Heart left ventricle (tissue), 16 donors: ENCODE measurements at regions of chr11 and their contacts with region 1.

Region 1: DNA sequence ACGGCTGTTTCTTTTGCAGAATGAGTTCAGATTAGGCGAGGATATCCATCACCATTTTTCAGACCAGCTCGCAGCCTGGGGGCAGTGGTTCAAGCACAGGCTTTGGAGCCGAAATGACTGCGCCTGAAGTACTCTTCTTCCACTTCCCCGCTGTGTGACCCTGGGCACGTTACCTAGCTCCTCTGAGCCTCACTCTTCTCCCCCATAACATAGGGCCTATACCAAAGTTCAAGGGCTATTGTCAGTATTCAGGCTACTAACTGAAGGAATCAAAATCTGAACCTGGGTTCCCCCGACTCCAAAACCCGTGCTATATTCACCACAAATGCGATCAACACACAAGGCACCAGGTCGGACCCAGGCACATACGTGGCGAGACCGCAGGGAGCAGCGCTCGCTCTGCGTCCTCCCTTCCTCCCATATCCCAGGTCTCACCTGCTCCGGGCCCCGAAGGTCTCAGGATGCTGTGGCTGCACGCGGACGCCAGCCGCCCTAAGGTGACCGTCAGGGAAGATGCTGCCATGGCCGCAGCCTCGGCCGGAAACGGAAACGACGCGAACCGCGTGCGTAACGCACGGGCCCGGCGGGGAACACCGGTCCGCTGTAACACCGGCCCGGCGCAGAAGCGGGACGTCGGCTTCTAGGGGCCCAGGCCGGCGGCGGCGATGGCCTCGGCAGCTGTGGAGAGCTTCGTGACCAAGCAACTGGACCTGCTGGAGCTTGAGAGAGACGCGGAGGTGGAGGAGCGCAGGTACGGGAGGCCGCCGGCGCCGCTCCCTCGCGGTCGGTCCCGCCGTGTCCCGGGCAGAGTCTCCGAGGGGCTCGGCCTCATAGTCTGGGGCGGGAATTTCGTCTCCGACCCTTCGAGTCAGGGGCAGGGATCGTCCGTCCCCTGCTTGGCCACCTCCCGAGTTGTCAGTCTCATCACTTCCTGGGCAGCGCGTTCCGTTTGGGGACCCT is at the starts of genes IGHMBP2 and MRPL21:
- DNase-seq: peak; percentile 82 to 92 (median 87)
- ATAC-seq: peak; percentile 84 to 96 (median 96)
- H3K4me3 ChIP-seq: peak within 1 kb of the TSS; percentile 73 to 96 (median 86)
- H3K27ac ChIP-seq: peak within 1 kb of the TSS; percentile 39 to 93 (median 86)
- H3K4me1 ChIP-seq: peaks cover 10 to 45% (median 28%) of the 10 kb centered on the region in 12 donors
- H3K27me3 ChIP-seq: no peaks in the 10 kb centered on the region
- CTCF ChIP-seq: peak in 1 of 12 donors; percentile 15
- POLR2A ChIP-seq: peak in 1 of 2 donors; percentile 73
- total RNA-seq, gene IGHMBP2: 8.3 to 18.9 (median 13.7) TPM
- total RNA-seq, gene MRPL21: 59.9 to 120 (median 87.9) TPM

Region 2: GRCh38 chr11:69018924-69019323 is 115.4 kb after region 1 on chr11:
- intact Hi-C with region 1: no loop called
- DNase-seq: no peak
- ATAC-seq: no peak
- H3K4me3 ChIP-seq: no peak overlapping the region
- H3K27ac ChIP-seq: peak overlapping the region in 1 of 12 donors; percentile 78
- H3K4me1 ChIP-seq: peaks cover 0 to 9% (median 1%) of the 10 kb centered on the region in 12 donors
- H3K27me3 ChIP-seq: peaks cover 0 to 8% (median 0%) of the 10 kb centered on the region in 9 donors
- CTCF ChIP-seq: no peak
- POLR2A ChIP-seq: no peak

Region 3: DNA sequence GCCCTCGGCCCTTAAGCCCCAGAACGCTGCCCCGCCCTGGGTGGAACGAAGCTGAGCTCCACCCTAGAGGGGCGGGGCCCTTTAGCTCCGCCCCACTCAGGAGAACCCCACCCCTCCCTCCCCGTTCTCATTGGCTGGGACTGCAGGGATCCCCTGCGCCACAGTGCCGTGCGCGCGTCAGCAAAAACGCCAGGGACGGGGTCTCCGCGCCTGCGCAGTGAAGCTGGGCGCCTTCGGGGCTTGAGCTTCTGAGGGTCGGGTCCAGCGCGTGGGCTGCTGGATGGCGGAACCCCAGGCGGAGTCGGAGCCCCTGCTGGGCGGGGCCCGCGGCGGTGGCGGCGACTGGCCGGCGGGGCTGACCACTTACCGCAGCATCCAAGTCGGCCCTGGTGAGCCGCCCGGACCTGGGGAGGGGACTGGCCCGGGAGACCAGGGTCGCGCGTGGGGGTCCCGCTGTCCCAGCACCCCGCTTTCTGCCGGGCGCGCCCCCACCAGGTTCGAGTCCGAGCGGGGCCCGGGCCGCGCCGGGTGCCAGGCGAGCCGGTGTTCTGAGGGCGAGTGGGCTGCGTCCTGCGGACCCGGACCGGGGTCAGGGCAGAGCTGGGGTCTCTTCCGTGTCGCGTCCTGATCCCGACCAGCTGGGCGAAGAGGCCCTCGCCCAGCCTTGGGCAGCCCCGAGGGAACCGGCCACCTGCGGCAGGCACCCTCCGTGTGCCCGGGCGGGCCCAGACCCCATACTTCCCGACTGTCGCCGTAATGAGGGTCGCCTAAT is 145.3 kb after region 1 on chr11 and contains the start of gene TPCN2:
- intact Hi-C with region 1: loop called in 2 of 10 experiments (anchors 10 kb)
- DNase-seq: peak; percentile 93 to 97 (median 96)
- ATAC-seq: peak; percentile 90 to 94 (median 92)
- H3K4me3 ChIP-seq: peak within 1 kb of the TSS; percentile 67 to 100 (median 87)
- H3K27ac ChIP-seq: peak within 1 kb of the TSS; percentile 39 to 98 (median 92)
- H3K4me1 ChIP-seq: peaks cover 0 to 64% (median 49%) of the 10 kb centered on the region in 12 donors
- H3K27me3 ChIP-seq: no peaks in the 10 kb centered on the region
- CTCF ChIP-seq: no peak
- POLR2A ChIP-seq: peak in 1 of 2 donors; percentile 86
- total RNA-seq, gene TPCN2: 4.1 to 17.6 (median 7.5) TPM

Region 4: GRCh38 chr11:69055598-69056516 is 152.3 kb after region 1 on chr11:
- intact Hi-C with region 1: loop called in 1 of 10 experiments (anchors 10 kb)
- DNase-seq: peak; percentile 57 to 80 (median 69)
- ATAC-seq: peak; percentile 68 to 87 (median 79)
- H3K4me3 ChIP-seq: no peak overlapping the region
- H3K27ac ChIP-seq: peak overlapping the region in 7 of 12 donors; percentile 21 to 76 (median 51)
- H3K4me1 ChIP-seq: peaks cover 0 to 56% (median 37%) of the 10 kb centered on the region in 12 donors
- H3K27me3 ChIP-seq: no peaks in the 10 kb centered on the region
- CTCF ChIP-seq: no peak
- POLR2A ChIP-seq: no peak